ENCODE measurements at regions of chr9 and their contacts with region 1.

Region 1: DNA sequence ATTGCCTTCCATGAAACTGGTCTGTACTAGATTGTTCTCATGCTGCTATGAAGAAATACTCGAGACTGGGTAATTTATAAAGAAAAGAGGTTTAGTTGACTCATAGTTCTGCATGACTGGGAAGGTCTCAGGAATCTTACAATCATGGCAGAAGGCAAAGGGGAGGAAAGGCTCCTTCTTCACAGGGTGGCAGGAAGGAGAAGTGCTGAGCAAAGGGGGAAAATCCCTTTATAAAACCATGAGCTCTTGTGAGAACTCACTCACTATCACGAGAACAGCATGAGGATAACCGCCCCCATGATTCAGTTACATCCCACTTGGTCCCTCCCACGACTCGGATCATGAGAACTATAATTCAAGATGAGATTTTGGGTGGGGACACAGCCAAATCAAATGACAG is 163.2 kb downstream of the RFK start:
- DNase-seq: no peak
- H3K4me3 ChIP-seq: no peak overlapping the region
- CTCF ChIP-seq: no peak
- POLR2A ChIP-seq: no peak

Region 2: DNA sequence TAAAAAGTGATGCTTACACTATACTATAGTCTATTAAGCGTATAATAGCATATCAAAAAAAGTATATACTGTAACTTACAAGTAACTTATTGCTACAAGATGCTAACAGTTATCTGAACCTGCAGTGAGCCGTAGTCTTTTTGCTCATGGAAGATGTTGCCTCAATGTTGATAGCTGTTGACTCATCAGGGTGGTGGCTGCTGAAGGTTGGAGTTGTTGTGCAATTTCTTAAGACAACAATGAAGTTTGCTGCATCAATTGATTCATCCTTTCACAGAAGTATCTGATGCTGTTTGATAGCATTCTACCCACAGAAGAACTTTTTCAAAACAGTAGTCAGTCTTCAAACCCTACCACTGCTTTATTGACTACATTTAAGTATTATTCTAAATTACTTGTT is 1270.4 kb before region 1 on chr9:
- intact Hi-C with region 1: loop called (anchors 5 kb)
- DNase-seq: peak in 1 of 2 donors; percentile 27
- H3K4me3 ChIP-seq: no peak overlapping the region
- CTCF ChIP-seq: no peak
- POLR2A ChIP-seq: no peak

Region 3: DNA sequence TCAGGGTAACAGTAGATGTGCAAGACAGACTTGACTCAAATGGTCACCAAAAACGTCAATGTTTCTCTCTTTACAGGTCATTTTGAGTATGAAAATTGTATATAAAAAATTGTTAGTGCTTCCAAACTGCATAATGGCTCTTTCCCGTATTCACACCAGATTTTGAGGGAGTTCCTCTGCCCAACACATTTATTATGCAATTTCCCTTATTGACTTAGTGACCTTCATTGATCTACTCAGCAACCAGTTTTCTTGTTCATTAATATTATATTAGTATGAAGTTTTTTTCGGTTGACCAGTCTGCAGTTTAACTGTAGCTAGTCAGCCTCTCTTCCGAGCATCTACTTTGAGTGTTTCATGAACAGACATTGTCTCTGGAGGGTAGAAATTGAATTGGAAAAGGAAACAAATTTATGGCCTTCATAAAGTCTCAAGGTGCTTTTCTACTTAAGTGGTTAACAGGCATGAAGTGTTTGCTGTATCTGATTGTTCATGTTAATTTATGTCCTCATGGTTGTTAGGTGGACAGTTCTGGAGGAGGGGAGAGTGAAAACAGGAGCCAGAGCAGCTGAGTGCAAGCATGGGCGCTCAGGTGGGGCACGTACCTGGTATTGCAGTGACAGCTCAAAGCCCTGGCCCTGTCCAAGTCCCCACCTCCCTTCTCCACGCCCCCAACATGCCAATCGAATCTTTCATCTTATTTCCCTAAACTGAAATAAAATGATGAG is 76.9 kb before region 1 on chr9:
- intact Hi-C with region 1: no loop called
- DNase-seq: no peak
- H3K4me3 ChIP-seq: no peak overlapping the region
- CTCF ChIP-seq: no peak
- POLR2A ChIP-seq: no peak